Prostate gland (tissue), 2 donors: ENCODE measurements at regions of chr12 and their contacts with region 1.

Region 1: DNA sequence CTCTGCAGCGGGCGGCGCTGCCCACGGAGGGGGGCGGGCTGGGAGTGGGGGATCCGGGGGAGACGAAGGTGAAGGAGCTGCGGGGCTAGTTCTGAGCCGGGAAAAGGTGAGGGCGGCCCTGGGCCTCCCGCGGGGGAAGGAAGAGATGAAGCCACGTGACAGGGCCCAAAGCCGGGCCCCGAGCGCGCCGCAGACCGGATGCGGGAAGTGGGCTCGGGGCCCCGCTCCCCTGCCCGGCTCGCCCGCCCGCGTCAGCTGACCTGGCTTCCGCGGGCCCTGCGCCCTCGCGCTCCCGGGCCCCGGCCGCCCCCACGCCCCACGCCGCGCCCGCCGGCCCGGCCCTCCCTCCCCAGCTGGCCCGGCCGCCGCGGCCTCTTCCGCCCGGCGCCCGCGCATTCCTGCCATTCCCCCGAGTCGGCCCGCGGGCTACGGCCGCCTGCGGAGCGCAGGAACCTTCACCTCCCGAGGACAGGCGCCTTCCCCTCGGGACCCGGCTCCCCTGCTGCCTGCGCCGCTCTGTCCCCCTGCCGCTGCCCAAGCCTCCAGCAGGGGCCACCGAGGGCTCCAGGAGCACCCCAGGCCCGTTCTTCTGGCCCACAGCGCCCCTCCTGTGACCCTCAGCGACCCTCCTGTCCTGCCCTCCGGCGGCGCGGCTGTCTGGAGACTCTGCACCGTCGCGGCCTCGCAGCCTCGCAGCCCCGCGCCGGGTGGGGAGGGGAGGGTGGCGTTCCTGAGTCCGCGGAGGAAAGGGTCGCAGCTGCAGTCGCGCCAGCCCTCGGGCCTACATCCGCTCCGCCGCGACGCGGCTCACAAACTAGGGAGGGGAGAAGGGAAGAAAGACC is 20.4 kb downstream of the NINJ2 start:
- DNase-seq: peak; percentile 66
- H3K4me3 ChIP-seq: peak overlapping the region; percentile 58 to 63
- H3K27ac ChIP-seq: peak overlapping the region; percentile 89 to 93
- H3K4me1 ChIP-seq: peaks cover 8% of the 10 kb centered on the region
- H3K27me3 ChIP-seq: no peaks in the 10 kb centered on the region
- CTCF ChIP-seq: peak in 2 of 4 experiments; percentile 19 to 40
- POLR2A ChIP-seq: no peak

Region 2: GRCh38 chr12:751192-751998 is 108.5 kb after region 1 on chr12:
- intact Hi-C with region 1: loop called (anchors 5 kb)
- DNase-seq: peak; percentile 85
- H3K4me3 ChIP-seq: peak overlapping the region; percentile 92 to 96
- H3K27ac ChIP-seq: peak overlapping the region; percentile 99
- H3K4me1 ChIP-seq: peaks cover 11% of the 10 kb centered on the region
- H3K27me3 ChIP-seq: no peaks in the 10 kb centered on the region
- CTCF ChIP-seq: peak; percentile 38 to 76 (median 74)
- POLR2A ChIP-seq: peak; percentile 54

Region 3: DNA sequence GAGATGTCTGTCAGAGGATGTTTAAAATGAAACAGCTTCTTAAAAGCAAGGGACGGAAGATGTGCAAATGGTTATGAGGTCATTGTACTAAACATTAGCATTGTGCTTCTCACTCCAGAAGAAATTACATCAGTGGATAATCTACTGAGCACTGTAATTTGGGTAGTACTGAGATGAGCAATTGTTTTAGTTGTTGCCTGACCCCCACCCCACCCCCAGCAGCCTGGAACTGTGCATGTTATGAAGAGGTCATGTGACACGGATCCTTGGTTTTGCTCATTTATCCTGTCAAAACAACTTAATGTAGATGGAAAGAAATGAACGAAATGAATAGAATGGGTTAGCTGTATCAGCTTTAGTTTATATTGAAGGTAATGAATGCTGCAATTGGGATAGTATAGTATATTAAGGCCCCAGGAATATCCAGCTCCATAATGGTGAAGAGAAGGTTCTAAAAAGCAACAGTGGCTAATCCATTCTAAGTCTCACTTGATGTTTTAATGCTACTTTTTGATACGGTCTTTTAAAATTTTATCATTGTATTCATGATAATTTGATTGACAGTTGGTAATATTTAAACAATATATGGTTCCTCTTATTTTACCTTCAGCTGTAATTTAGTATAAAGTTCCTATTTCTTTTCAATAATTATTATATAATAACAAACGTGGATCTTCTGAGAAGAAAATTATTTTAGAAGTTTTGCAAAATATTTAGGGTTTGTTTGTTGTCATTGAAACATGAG is 168.0 kb after region 1 on chr12:
- intact Hi-C with region 1: loop called (anchors 10 kb)
- DNase-seq: no peak
- H3K4me3 ChIP-seq: no peak overlapping the region
- H3K27ac ChIP-seq: no peak overlapping the region
- H3K4me1 ChIP-seq: no peaks in the 10 kb centered on the region
- H3K27me3 ChIP-seq: no peaks in the 10 kb centered on the region
- CTCF ChIP-seq: no peak
- POLR2A ChIP-seq: no peak

Region 4: GRCh38 chr12:1594261-1595025 is 951.6 kb after region 1 on chr12 and contains the start of gene FBXL14:
- intact Hi-C with region 1: loop called (anchors 10 kb)
- DNase-seq: peak; percentile 80
- H3K4me3 ChIP-seq: peak within 1 kb of the TSS; percentile 73 to 75
- H3K27ac ChIP-seq: peak within 1 kb of the TSS; percentile 96 to 97
- H3K4me1 ChIP-seq: peaks cover 12% of the 10 kb centered on the region
- H3K27me3 ChIP-seq: no peaks in the 10 kb centered on the region
- CTCF ChIP-seq: peak in 1 of 4 experiments; percentile 16
- POLR2A ChIP-seq: peak; percentile 38
- total RNA-seq, gene FBXL14: 21.3 to 28.7 TPM